ENCODE measurements at regions of chr9 and their contacts with region 1.

Region 1: DNA sequence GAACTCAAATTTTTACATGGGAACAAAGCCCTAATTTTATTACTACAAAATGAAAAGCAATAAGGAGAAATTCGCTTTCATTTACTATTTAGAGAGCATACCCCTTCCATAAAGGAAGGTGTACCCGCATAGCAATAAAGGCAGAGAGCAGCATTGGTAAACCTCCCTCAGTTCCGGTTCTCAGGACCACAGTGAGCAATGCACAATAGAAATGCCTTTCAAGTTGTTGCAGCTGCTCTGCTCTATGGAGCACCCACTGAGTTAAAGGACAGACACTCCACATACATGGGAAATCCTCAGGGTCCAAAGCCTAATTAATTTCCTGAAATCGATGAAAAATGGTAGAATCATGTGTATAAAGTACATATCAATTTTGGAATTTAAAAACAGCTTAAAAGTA is 89.9 kb upstream of the MPDZ start:
- DNase-seq: no peak
- ATAC-seq: no peak
- H3K4me3 ChIP-seq: no peak overlapping the region
- H3K27ac ChIP-seq: no peak overlapping the region
- H3K4me1 ChIP-seq: no peaks in the 10 kb centered on the region
- H3K27me3 ChIP-seq: no peaks in the 10 kb centered on the region

Region 2: DNA sequence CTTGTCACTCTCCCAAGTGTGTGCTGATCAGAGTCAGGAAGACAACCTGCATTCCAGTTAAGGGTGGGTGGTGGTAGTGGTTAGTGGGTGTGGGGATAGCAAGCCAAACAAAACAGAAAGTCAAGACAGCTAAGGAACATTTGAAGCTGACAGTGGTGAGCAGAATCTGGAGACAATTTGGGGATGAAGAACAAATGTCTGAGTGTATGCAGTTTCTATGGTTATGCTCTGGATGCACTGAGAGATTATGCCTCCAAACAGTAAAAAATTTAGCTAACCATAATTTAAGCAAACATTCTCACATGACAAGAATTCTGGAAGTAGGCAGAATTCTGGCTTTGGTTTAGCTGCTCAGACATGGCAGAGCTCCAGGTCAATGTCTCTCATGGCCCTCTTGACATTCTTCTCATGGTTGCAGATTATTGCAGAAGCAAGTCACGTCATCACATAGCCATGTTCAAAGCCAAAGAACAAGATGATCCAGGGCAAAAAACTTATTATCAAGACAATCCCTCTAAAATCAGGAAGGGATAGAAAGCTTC is 445.9 kb before region 1 on chr9:
- intact Hi-C with region 1: no loop called
- DNase-seq: no peak
- ATAC-seq: no peak
- H3K4me3 ChIP-seq: no peak overlapping the region
- H3K27ac ChIP-seq: no peak overlapping the region
- H3K4me1 ChIP-seq: no peaks in the 10 kb centered on the region
- H3K27me3 ChIP-seq: no peaks in the 10 kb centered on the region

Region 3: DNA sequence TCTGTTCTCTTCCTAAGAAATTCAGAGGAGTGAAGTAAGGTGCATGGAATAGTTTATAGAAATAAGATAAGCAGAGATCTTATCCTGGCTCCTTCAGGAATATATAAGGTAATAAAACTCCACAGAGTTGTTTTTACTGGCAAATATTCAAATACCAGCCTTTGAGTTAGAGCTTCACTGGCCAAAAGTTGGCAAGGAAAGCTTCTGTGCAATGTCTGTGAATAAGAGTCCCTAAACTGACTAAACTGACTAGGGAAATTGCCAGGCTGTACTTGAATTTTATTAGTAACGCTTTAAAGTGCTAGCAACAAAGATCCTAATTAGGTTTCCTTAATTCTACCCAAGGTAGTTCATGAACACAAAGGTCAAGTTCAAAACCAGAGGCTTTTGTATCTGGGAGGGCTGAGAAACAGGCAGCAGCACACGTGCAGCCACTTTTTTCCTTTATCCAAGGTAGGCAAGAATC is 41.2 kb after region 1 on chr9:
- intact Hi-C with region 1: no loop called
- DNase-seq: no peak
- ATAC-seq: no peak
- H3K4me3 ChIP-seq: no peak overlapping the region
- H3K27ac ChIP-seq: no peak overlapping the region
- H3K4me1 ChIP-seq: peaks cover 0 to 2% of the 10 kb centered on the region in 2 donors
- H3K27me3 ChIP-seq: no peaks in the 10 kb centered on the region

Region 4: DNA sequence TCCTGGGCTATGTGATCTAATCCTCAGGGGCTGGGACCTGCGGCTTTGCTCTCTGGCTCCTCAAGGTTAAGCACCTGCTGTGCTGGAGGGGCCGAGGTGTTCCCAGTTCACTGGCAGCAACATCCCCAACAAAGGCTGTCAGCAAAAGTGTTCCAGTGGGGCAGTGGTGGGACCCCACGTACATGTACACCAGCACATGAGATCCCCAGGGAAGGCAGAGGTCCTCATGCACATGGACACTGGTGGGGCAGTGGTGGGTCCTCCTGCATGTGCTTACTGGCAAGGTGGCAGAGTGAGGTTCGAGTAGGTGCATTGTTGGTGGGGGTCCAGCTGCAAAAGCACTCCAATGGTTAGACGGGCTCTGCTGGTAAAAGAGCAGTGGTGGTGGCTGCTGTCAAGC is 165.7 kb after region 1 on chr9:
- intact Hi-C with region 1: loop called in 1 of 2 experiments (anchors 5 kb)
- DNase-seq: no peak
- ATAC-seq: no peak
- H3K4me3 ChIP-seq: no peak overlapping the region
- H3K27ac ChIP-seq: no peak overlapping the region
- H3K4me1 ChIP-seq: peaks cover 2 to 3% of the 10 kb centered on the region in 2 donors
- H3K27me3 ChIP-seq: no peaks in the 10 kb centered on the region